Heart right ventricle (tissue), 16 donors: ENCODE measurements at regions of chr12 and their contacts with region 1.

Region 1: DNA sequence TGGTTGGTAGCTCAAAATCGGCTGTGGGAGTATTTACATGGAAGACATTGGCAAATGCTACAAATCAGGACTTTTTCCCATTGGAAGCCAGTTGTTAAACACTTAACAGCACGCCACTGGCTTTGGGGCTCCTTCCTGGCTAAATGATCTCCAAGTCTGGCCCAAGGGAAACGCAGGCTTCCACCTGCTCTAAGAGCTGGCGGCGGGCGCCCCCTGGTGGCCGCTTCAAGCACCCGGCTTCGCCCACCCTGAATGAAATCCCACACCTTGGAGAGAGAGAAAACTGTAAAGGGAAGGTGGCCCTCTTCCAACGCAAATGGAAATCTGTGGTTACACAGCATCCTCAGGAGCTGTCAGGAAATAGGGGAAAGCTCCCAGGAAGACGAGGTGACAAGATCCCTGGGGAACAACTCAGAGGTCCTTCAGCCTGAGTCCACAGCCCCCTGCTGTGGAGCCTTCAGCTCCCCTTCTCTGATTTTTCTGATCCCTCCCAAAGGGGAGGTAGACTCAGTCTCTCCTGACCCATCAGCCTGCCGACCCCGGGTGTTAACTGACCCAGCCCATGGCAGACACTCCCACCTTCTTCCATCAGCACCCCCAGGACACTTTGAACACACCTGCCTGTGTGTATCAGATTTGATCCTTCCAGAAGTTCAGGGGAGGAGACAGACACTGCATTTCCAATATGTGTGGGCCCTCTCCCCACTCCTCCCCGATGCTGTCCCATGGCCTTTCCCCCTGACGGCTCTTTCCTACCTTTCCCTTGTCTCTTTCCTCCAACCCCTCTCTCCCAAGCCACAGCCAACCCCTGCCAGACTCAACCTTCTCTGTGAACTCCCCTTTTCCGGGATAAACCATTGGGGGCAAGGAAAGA is 15.4 kb downstream of the SELPLG start:
- DNase-seq: peak; percentile 72 to 82
- ATAC-seq: peak; percentile 72 to 90 (median 84)
- H3K4me3 ChIP-seq: no peak overlapping the region
- H3K27ac ChIP-seq: peak overlapping the region in 1 of 10 donors; percentile 71
- H3K4me1 ChIP-seq: peaks cover 0 to 66% (median 14%) of the 10 kb centered on the region in 9 donors
- H3K27me3 ChIP-seq: no peaks in the 10 kb centered on the region
- CTCF ChIP-seq: peak; percentile 97 to 99 (median 98)

Region 2: GRCh38 chr12:108562348-108563135 is 55.8 kb before region 1 on chr12 and contains the start of gene ISCU:
- intact Hi-C with region 1: loop called in 8 of 10 experiments (anchors 1 to 5 kb)
- DNase-seq: peak; percentile 98 to 99
- ATAC-seq: peak; percentile 88 to 95 (median 92)
- H3K4me3 ChIP-seq: peak within 1 kb of the TSS; percentile 57 to 99 (median 90)
- H3K27ac ChIP-seq: peak within 1 kb of the TSS; percentile 78 to 97 (median 94)
- H3K4me1 ChIP-seq: peaks cover 5 to 80% (median 67%) of the 10 kb centered on the region in 9 donors
- H3K27me3 ChIP-seq: no peaks in the 10 kb centered on the region
- CTCF ChIP-seq: no peak
- total RNA-seq, gene ISCU: 321 to 630 (median 522) TPM

Region 3: DNA sequence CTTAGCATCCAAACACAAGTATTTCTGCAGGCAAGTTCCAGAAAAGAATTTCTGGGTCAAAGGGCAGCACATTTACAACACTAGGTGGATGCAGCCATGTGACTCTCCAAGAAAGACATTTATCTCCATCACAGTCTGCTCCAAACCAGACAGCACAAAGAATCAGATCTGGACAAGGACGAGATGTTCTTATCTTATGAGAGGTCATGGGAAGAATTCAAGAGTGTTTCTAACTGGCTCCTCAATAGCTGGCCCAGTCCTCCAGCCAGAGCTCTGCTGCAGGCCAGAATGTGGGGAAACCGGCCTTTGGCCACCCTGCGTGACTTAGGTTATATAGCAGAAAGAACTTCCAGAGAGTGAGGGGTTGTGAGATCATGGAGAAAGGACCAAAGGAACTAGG is 37.8 kb before region 1 on chr12:
- intact Hi-C with region 1: no loop called
- DNase-seq: no peak
- ATAC-seq: peak in 4 of 8 donors; percentile 22 to 39 (median 24)
- H3K4me3 ChIP-seq: no peak overlapping the region
- H3K27ac ChIP-seq: peak overlapping the region in 4 of 10 donors; percentile 5 to 44 (median 18)
- H3K4me1 ChIP-seq: peaks cover 0 to 31% (median 6%) of the 10 kb centered on the region in 9 donors
- H3K27me3 ChIP-seq: no peaks in the 10 kb centered on the region
- CTCF ChIP-seq: no peak